A549 (cell line): ENCODE measurements at regions of chr9 and their contacts with region 1.

Region 1: DNA sequence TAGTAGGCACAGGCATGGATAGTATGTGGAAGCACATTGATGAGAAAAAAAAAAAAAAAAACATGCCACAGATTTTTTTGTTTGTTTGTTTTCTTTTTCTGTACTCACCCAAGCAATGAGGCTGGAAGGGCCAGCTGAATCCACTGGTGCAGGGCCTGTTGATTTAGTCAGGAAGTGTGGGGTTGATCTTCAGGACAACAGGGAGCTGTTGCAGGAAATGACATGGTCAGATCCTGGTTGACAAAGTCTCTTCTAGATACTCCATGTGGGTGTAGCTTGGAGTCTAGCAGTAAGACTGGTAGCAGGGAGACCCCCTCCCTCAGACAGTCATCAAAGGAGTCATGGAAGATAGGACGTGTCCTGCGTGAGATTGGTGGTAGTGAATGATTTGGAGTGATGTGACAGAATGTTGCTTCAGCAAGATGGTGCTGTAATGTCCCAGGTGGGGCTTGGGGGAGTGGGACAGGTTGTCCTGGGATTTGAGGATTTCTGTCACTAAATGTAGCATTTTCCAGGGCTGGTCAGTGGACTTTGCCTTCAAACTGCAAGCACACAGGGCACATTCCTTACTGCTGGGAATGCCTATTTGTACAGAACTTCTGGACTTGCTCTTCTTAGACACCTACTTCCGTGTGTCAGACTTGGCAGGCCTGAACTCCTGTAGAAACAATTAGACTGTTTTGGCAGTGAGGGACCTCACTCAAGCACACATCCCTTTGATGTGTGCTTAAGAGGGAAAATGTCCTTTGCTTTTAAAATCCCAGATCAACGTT is 192.0 kb downstream of the PAPPA start:
- DNase-seq: no peak
- ATAC-seq: peak; percentile 12 to 13; a peak in 3 of 6 replicates
- H3K4me3 ChIP-seq: no peak overlapping the region
- H3K27ac ChIP-seq: peak overlapping the region in 1 of 2 experiments; percentile 22; a peak in 4 of 6 replicates
- H3K4me1 ChIP-seq: peaks cover 20% of the 10 kb centered on the region
- CTCF ChIP-seq: no peak
- EP300 ChIP-seq: no peak
- POLR2A ChIP-seq: no peak
- RAD21 ChIP-seq: no peak

Region 2: DNA sequence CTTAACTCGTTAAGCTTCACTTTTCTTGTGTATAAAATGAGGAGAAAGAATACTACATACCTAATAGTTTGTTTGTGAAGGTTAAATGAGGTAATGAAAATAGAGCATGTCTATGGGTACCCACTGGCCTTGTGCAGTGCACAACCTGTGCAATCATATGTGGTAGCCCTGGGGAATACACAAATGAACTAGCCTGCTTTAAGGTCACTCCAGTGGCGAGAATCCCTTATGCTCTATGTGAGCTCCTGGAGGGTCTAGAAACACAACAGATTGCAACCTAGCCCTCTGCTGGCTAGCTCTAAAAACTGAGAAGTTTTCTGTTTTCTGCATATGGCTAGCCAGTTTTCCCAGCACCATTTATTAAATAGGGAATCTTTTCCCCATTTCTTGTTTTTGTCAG is 10.7 kb after region 1 on chr9:
- CTCF ChIA-PET with region 1: interaction called, 10 read pairs
- POLR2A ChIA-PET with region 1: no interaction called
- DNase-seq: no peak
- ATAC-seq: no peak
- H3K4me3 ChIP-seq: no peak overlapping the region
- H3K27ac ChIP-seq: no peak overlapping the region
- H3K4me1 ChIP-seq: peaks cover 35% of the 10 kb centered on the region
- CTCF ChIP-seq: no peak
- EP300 ChIP-seq: no peak
- POLR2A ChIP-seq: no peak
- RAD21 ChIP-seq: no peak